ENCODE measurements at regions of chr4 and their contacts with region 1.

Region 1: GRCh38 chr4:68271851-68272756 is 26.6 kb upstream of the TMPRSS11B start:
- DNase-seq: peak in 1 of 3 donors; percentile 6
- ATAC-seq: peak; percentile 70
- H3K4me3 ChIP-seq: no peak overlapping the region
- H3K4me1 ChIP-seq: no peaks in the 10 kb centered on the region
- CTCF ChIP-seq: no peak

Region 2: DNA sequence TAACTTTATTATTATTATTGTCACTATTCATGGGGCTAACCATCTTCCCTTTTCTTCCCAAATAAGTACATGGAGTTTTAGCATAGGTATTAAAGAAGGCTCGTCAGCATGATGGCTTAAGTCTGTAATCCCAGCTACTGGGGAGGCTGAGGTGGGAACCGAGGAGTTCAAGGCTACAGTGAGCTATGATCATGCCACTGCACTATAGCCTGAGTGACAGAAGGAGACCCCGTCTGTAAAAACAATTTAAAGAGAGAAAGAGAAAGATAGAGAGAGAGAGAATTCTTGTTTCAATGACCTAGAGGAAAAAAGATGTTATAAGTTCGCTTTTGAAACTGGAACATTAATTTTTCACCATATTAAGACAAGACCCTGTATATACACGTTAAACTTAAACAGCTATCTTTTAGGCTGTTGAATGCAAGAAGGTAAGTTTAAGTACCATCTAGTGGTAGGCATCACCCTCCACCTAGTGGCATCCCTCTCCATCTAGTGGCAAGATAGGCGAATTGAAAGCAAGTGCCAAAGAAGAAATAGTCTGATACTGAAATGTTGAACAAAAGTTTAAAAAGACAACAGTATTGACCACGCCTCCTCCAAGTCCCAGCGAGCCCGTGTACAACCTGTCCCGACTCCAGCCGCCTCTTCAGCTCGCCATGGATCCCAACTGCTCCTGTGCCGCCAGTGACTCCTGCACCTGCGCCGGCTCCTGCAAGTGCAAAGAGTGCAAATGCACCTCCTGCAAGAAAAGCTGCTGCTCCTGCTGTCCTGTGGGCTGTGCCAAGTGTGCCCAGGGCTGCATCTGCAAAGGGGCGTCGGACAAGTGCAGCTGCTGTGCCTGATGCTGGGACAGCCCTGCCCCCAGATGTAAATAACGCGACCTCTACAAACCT is 103.8 kb after region 1 on chr4:
- intact Hi-C with region 1: loop called (anchors 5 kb)
- DNase-seq: peak; percentile 52 to 65 (median 58)
- ATAC-seq: peak; percentile 92
- H3K4me3 ChIP-seq: no peak overlapping the region
- H3K4me1 ChIP-seq: no peaks in the 10 kb centered on the region
- CTCF ChIP-seq: peak; percentile 50

Measured in mucosa of descending colon (tissue), 3 donors.